MCF 10A (cell line): ENCODE measurements at regions of chr12 and their contacts with region 1.

Region 1: GRCh38 chr12:64160711-64161060 is 61.4 kb downstream of the KICS2 start:
- DNase-seq: peak; percentile 80
- H3K4me3 Mint-ChIP-seq: peak overlapping the region; percentile 35
- H3K27ac Mint-ChIP-seq: peak overlapping the region; percentile 91
- H3K4me1 Mint-ChIP-seq: peaks cover 28% of the 10 kb centered on the region
- H3K27me3 Mint-ChIP-seq: no peaks in the 10 kb centered on the region
- CTCF ChIP-seq: no peak

Region 2: DNA sequence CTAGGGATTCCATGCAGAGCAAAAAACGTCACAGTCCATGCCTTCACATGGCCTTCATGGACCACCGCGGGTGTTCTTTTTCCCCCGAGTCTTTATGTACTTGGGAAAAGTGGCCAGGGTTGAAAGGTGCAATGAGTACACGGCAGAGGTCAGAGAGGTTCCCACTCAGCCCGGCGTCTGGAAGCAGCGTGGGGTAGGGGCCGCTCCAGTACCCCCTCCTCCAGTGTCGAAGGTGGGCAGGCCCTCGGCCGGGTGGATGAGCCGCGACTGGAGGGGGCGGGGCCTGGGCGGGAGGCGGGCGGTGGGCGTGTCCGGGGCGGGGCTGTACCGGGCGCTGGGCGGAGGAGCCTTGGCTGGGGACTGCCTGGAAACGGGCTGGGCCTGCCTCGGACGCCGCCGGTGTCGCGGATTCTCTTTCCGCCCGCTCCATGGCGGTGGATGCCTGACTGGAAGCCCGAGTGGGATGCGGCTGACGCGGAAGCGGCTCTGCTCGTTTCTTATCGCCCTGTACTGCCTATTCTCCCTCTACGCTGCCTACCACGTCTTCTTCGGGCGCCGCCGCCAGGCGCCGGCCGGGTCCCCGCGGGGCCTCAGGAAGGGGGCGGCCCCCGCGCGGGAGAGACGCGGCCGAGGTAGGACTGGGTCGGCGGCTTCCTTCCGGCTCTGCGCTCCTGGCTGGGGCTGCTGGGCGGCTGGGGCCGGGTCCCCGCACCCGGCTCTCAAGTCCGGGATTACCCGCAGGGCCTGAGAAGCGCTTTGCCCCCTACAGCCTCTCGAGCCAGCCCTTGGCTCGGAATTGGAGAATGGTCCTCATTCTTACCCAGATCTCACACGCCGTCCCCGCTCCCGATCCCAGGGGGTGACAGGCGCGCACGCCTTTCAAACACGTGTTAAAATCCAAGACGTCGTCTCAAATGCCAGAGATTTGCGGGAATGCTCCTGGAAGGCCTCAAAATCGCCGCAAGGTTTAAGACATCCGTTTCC is 380.9 kb before region 1 on chr12 and contains the start of gene RXYLT1:
- CTCF ChIA-PET with region 1: no interaction called
- POLR2A ChIA-PET with region 1: no interaction called
- intact Hi-C with region 1: no loop called
- DNase-seq: peak; percentile 74
- H3K4me3 Mint-ChIP-seq: peak within 1 kb of the TSS; percentile 98
- H3K27ac Mint-ChIP-seq: peak within 1 kb of the TSS; percentile 94
- H3K4me1 Mint-ChIP-seq: peaks cover 9% of the 10 kb centered on the region
- H3K27me3 Mint-ChIP-seq: peaks cover 31% of the 10 kb centered on the region
- CTCF ChIP-seq: no peak
- total RNA-seq, gene RXYLT1: 21.1 and 26.7 TPM in 2 replicates

Region 3: GRCh38 chr12:64171715-64172114 is 11.0 kb after region 1 on chr12:
- CTCF ChIA-PET with region 1: interaction called, 8 read pairs
- POLR2A ChIA-PET with region 1: interaction called, 12 read pairs
- intact Hi-C with region 1: no loop called
- DNase-seq: peak; percentile 72
- H3K4me3 Mint-ChIP-seq: peak overlapping the region; percentile 45
- H3K27ac Mint-ChIP-seq: peak overlapping the region; percentile 97
- H3K4me1 Mint-ChIP-seq: peaks cover 29% of the 10 kb centered on the region
- H3K27me3 Mint-ChIP-seq: no peaks in the 10 kb centered on the region
- CTCF ChIP-seq: no peak